AG04450 (cell line): ENCODE measurements at regions of chr15 and their contacts with region 1.

Region 1: GRCh38 chr15:55764398-55764797 is 21.4 kb upstream of the PRTG start:
- DNase-seq: no peak
- H3K4me3 ChIP-seq: no peak overlapping the region
- H3K27ac ChIP-seq: no peak overlapping the region
- H3K27me3 ChIP-seq: peaks cover 4% of the 10 kb centered on the region
- CTCF ChIP-seq: no peak

Region 2: DNA sequence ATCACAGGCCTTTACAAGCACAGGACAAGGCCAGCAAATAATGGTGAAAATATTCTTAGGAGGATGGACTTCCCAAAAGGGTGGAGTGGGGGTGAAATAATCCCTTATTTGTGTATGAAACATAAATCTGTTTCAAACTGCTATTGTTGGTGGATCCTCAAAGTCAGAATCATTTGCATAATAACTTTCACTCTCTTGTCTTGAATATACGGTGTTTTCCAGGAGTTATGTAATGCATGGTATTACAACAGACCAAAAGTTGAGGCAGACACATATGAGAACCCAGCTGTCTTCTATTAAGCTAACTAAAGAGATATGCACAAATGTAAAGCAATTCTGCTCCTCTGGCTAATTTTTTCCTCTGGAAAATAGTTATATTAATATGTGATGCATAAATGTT is 79.1 kb before region 1 on chr15:
- CTCF ChIA-PET with region 1: no interaction called
- POLR2A ChIA-PET with region 1: no interaction called
- DNase-seq: no peak
- H3K4me3 ChIP-seq: no peak overlapping the region
- H3K27ac ChIP-seq: no peak overlapping the region
- H3K27me3 ChIP-seq: peaks cover 3% of the 10 kb centered on the region
- CTCF ChIP-seq: no peak

Region 3: GRCh38 chr15:55743729-55744655 is 20.4 kb before region 1 on chr15:
- CTCF ChIA-PET with region 1: no interaction called
- POLR2A ChIA-PET with region 1: no interaction called
- DNase-seq: no peak
- H3K4me3 ChIP-seq: peak overlapping the region; percentile 64
- H3K27ac ChIP-seq: no peak overlapping the region
- H3K27me3 ChIP-seq: peaks cover 7% of the 10 kb centered on the region
- CTCF ChIP-seq: no peak

Region 4: GRCh38 chr15:55775316-55775715 is 10.9 kb after region 1 on chr15:
- CTCF ChIA-PET with region 1: interaction called, 21 read pairs
- POLR2A ChIA-PET with region 1: no interaction called
- DNase-seq: no peak
- H3K4me3 ChIP-seq: no peak overlapping the region
- H3K27ac ChIP-seq: no peak overlapping the region
- H3K27me3 ChIP-seq: peaks cover 12% of the 10 kb centered on the region
- CTCF ChIP-seq: no peak